A673 (cell line): ENCODE measurements at regions of chr11 and their contacts with region 1.

Region 1: DNA sequence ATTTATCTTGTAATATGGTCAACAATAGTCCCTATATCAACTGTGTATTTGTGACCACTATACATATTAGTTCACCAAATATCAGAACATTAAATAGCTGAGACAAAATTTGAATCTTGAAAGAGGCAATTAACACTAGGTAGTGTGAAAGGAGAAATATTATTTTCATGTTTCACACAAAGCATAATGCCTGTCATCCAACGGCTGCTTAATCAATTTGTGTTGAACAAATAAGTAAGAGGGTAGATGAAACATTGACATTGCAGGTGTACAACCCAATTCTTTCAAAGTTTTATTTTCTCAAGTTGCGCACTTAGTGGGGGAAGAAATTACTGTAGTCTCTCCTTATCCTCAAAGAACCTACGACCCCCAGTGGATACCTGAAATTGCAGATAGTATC is 3.4 kb upstream of the OR8I2 start:
- DNase-seq: peak; percentile 2
- H3K4me3 ChIP-seq: no peak overlapping the region
- H3K27ac ChIP-seq: no peak overlapping the region
- H3K4me1 ChIP-seq: no peaks in the 10 kb centered on the region
- H3K27me3 ChIP-seq: no peaks in the 10 kb centered on the region
- CTCF ChIP-seq: peak; percentile 38; the same call in 1 of the 2 replicates

Region 2: GRCh38 chr11:55714982-55715888 is 374.5 kb before region 1 on chr11:
- CTCF ChIA-PET with region 1: no interaction called
- POLR2A ChIA-PET with region 1: no interaction called
- intact Hi-C with region 1: loop called (anchors 5 kb)
- DNase-seq: peak; percentile 58
- H3K4me3 ChIP-seq: no peak overlapping the region
- H3K27ac ChIP-seq: no peak overlapping the region
- H3K4me1 ChIP-seq: no peaks in the 10 kb centered on the region
- H3K27me3 ChIP-seq: no peaks in the 10 kb centered on the region
- CTCF ChIP-seq: peak; percentile 76

Region 3: DNA sequence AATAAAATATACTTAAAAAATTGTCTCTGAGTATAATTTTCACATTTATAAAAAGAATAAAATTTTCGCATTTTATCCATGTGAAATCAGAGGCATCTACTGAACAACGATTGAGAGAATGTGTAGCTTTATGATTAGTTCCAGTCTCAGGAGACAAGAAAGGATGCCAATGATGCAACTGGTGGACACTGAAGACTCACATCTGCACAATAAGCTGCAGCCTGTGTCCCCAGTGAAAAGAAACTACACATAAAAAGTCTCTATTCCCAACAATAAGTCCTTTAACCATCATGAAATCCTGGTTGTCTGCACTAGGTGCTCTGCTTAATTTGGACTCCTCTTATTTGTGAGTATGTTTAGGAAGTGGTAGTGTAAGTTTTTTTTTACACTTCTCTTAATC is 40.2 kb before region 1 on chr11:
- CTCF ChIA-PET with region 1: no interaction called
- POLR2A ChIA-PET with region 1: no interaction called
- intact Hi-C with region 1: no loop called
- DNase-seq: no peak
- H3K4me3 ChIP-seq: no peak overlapping the region
- H3K27ac ChIP-seq: no peak overlapping the region
- H3K4me1 ChIP-seq: no peaks in the 10 kb centered on the region
- H3K27me3 ChIP-seq: no peaks in the 10 kb centered on the region
- CTCF ChIP-seq: no peak